ENCODE measurements at regions of chr4 and their contacts with region 1.

Region 1: DNA sequence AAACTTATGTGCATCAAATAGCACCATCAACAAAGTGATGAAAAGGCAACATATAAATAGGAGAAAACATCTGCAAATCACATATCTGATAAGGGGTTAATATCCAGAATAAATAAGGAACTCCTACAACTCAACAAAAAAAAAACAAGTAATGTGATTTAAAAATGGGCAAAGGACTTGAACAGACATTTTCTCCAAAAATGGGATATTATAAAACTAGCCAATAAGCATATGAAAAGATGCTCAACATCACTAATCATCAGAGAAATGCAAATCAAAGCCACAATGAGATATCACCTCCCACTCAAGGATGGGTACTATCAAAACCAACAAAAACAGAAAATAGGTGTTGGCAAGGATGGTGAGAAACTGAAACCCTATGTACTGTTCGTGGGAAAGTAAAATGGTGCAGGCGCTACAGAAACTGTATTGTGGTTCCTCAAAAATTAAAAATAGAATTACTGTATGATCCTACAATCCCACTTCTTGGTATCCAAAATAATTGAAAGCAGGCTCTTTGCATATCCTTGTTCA is 2.4 kb downstream of the DNAJB14 start:
- DNase-seq: peak in 2 of 9 experiments; percentile 13 to 55
- ATAC-seq: no peak
- H3K4me3 ChIP-seq: no peak overlapping the region
- H3K4me3 Mint-ChIP-seq: peak overlapping the region; percentile 64
- H3K27ac ChIP-seq: peak overlapping the region in 1 of 2 experiments; percentile 3
- H3K27ac Mint-ChIP-seq: peak overlapping the region; percentile 71
- H3K4me1 ChIP-seq: peaks cover 67% of the 10 kb centered on the region
- H3K4me1 Mint-ChIP-seq: peaks cover 65% of the 10 kb centered on the region
- H3K27me3 ChIP-seq: no peaks in the 10 kb centered on the region
- H3K27me3 Mint-ChIP-seq: no peaks in the 10 kb centered on the region
- CTCF ChIP-seq: no peak

Region 2: GRCh38 chr4:99927566-99927965 is 16.4 kb before region 1 on chr4:
- CTCF ChIA-PET with region 1: interaction called, 8 read pairs
- POLR2A ChIA-PET with region 1: interaction called, 8 read pairs
- intact Hi-C with region 1: loop called in 1 of 2 experiments (anchors 2 kb)
- DNase-seq: no peak
- ATAC-seq: no peak
- H3K4me3 ChIP-seq: no peak overlapping the region
- H3K4me3 Mint-ChIP-seq: no peak overlapping the region
- H3K27ac ChIP-seq: no peak overlapping the region
- H3K27ac Mint-ChIP-seq: peak overlapping the region; percentile 12
- H3K4me1 ChIP-seq: peaks cover 17% of the 10 kb centered on the region
- H3K4me1 Mint-ChIP-seq: peaks cover 59% of the 10 kb centered on the region
- H3K27me3 ChIP-seq: no peaks in the 10 kb centered on the region
- H3K27me3 Mint-ChIP-seq: no peaks in the 10 kb centered on the region
- CTCF ChIP-seq: no peak